WTC11 (cell line): ENCODE measurements at regions of chr1 and their contacts with region 1.

Region 1: DNA sequence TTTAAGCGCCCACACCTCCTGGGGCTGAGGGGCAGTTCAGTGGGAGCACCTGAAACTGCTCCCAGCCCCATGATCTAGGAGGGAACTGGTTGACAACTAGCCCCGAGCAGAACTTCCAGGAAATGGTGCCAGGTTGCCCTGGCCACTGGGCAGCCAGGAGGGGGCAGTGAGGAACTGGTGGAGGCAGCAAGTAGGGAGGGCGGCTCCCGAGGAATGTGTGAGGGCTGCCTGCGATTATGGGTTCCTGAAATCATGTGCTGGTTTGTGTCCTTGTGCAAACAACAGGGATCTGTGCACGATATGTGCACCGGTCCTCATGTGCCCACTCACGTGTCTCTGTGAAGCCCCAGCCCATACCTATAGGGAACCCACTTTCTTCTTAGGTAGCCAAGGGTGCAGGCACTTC is 9.9 kb downstream of the GPR3 start:
- DNase-seq: peak; percentile 69
- ATAC-seq: peak; percentile 18
- H3K4me3 Mint-ChIP-seq: no peak overlapping the region
- H3K27ac Mint-ChIP-seq: peak overlapping the region; percentile 91
- H3K4me1 Mint-ChIP-seq: peaks cover 78% of the 10 kb centered on the region
- H3K27me3 Mint-ChIP-seq: no peaks in the 10 kb centered on the region
- CTCF ChIP-seq: no peak

Region 2: DNA sequence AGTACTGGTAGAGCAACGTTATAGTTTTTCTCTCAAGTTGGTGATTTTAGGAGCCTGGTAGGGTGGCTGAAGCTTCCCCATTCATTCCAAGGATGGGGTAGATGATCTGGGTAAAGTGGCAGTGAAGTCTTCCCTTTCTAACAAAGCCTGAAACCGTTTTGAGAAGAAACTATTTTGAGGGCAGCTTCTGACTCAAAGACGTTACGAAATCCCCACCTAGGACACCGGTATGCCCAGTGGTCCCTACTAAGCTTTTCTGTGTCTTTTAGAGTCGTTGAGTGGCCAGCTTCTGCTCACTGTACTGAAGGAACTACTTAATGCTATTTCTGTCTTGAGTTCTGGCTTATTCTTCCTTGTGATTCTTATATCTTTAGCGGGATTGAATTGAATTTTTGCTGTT is 166.5 kb before region 1 on chr1:
- CTCF ChIA-PET with region 1: no interaction called
- POLR2A ChIA-PET with region 1: no interaction called
- DNase-seq: no peak
- ATAC-seq: no peak
- H3K4me3 Mint-ChIP-seq: peak overlapping the region; percentile 94
- H3K27ac Mint-ChIP-seq: no peak overlapping the region
- H3K4me1 Mint-ChIP-seq: peaks cover 11% of the 10 kb centered on the region
- H3K27me3 Mint-ChIP-seq: peaks cover 18% of the 10 kb centered on the region
- CTCF ChIP-seq: no peak

Region 3: DNA sequence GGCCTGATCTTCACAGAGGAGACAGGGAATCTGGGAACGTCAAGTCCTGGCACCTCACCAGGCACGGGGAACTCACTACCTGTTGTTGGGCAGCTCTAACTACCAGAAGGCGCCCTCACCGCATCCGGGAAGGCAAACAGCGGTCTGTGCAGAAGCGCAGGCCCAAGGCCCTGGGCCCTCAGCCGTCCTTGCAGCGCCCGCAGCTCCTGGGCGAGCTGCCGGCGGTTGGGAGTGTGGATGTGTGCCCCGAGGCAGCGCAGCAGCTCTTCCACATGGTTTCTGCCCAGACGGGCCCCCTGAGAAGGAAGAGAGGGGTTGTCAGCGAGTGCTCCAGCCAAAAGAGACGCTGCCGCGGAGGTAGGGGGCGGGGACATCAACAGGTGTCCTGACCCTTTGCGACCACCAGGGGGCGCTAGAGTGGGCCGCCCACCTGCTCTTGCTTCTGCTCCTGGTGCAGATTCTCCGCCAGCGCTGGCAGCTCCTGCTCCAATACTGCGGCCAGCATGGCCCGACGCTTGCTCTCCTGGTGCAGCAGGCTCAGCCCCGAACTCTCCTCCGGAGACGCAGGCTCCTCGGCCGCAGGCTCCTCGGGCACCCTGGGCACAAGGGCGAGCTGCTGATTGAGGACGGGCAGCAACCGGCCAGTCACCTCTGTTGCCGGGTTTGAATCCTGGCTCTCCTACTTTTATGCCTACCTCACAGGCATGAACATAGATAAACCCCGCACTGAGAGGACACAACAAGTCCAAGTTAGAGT is 44.9 kb before region 1 on chr1:
- CTCF ChIA-PET with region 1: interaction called, 21 read pairs
- POLR2A ChIA-PET with region 1: no interaction called
- DNase-seq: peak; percentile 87
- ATAC-seq: peak; percentile 70
- H3K4me3 Mint-ChIP-seq: peak overlapping the region; percentile 37
- H3K27ac Mint-ChIP-seq: no peak overlapping the region
- H3K4me1 Mint-ChIP-seq: peaks cover 17% of the 10 kb centered on the region
- H3K27me3 Mint-ChIP-seq: peaks cover 49% of the 10 kb centered on the region
- CTCF ChIP-seq: peak; percentile 100

Region 4: DNA sequence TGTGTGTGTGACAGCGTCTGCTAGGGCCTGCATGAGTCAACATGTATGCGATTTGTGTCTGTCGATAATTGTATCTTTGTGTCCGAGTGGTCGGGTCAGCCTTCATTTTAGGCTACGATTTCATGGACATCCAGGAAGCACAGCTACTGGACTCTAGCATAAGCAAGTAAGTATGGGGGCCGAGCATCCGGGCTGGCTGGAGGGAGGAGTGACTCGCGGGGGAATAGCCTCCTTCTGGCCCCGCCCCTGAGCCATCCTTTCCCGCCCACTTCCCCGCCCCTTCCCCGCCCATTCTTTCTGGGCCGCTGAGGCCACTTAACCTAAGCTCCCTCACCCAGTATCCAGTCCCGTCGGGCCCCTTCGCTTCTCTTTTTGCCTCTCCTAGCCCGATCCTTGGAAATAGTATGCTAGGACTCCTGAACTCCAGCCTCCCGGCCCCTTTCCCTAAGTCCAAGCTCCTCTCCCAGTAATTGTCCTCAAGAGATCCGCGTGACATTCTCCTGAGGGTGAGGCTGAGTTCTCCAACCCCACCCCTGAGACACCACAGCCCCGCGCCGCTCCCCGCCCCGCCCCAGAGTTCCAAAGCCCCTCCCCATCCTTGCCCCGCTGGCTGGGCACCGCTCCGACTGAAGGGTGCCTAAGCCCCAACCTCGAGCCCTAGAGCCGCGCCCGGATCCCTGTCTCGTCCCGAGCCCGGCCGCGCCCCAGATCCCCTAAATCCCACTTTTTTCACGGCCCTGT is 36.8 kb before region 1 on chr1:
- CTCF ChIA-PET with region 1: interaction called, 44 read pairs
- POLR2A ChIA-PET with region 1: interaction called, 4 read pairs
- DNase-seq: peak; percentile 86
- ATAC-seq: peak; percentile 53
- H3K4me3 Mint-ChIP-seq: peak overlapping the region; percentile 84
- H3K27ac Mint-ChIP-seq: peak overlapping the region; percentile 97
- H3K4me1 Mint-ChIP-seq: peaks cover 25% of the 10 kb centered on the region
- H3K27me3 Mint-ChIP-seq: peaks cover 33% of the 10 kb centered on the region
- CTCF ChIP-seq: no peak

Region 5: DNA sequence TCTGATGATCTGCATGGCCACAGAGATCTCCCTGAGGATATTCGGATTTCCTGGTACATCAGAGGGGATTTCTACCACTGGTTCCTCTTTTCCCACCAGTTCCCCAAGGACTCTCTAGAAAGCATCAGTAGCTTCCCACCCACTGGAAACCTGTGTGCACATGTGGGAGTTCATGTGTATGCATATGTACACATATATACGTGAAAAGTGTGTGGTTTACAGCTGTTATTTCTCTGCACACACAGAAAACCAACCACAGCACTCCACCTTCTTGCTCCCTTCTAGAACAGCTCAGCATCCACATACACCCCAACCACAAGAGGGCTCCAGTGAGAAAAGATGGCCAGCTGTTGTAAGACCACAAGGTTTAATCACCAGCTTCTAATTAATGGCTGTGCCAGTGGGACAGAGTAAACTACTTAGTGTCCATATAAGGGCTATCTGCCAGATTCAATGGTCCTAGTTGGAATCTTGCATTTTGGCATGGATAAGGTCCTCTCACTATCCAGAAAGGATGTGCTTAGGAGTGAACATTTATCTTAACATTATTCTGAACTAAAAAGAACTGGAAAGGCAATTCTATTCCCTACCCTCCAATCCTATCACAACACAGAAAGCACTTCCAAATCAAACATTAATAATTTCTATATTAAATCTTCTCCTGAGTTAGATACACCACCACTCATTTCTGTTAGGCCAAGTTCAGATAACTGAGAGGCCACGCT is 14.2 kb after region 1 on chr1:
- CTCF ChIA-PET with region 1: interaction called, 36 read pairs
- POLR2A ChIA-PET with region 1: interaction called, 3 read pairs
- DNase-seq: no peak
- ATAC-seq: peak; percentile 67
- H3K4me3 Mint-ChIP-seq: no peak overlapping the region
- H3K27ac Mint-ChIP-seq: peak overlapping the region; percentile 50; the same call in 1 of the 2 replicates
- H3K4me1 Mint-ChIP-seq: peaks cover 41% of the 10 kb centered on the region
- H3K27me3 Mint-ChIP-seq: no peaks in the 10 kb centered on the region
- CTCF ChIP-seq: 0 out of 2 replicates have a peak, but pooled peaks have one; percentile 1

Region 6: GRCh38 chr1:27423709-27424108 is 21.4 kb after region 1 on chr1:
- CTCF ChIA-PET with region 1: interaction called, 14 read pairs
- POLR2A ChIA-PET with region 1: interaction called, 5 read pairs
- DNase-seq: no peak
- ATAC-seq: no peak
- H3K4me3 Mint-ChIP-seq: no peak overlapping the region
- H3K27ac Mint-ChIP-seq: peak overlapping the region; percentile 19; the same call in 1 of the 2 replicates
- H3K4me1 Mint-ChIP-seq: peaks cover 71% of the 10 kb centered on the region
- H3K27me3 Mint-ChIP-seq: no peaks in the 10 kb centered on the region
- CTCF ChIP-seq: no peak

Region 7: DNA sequence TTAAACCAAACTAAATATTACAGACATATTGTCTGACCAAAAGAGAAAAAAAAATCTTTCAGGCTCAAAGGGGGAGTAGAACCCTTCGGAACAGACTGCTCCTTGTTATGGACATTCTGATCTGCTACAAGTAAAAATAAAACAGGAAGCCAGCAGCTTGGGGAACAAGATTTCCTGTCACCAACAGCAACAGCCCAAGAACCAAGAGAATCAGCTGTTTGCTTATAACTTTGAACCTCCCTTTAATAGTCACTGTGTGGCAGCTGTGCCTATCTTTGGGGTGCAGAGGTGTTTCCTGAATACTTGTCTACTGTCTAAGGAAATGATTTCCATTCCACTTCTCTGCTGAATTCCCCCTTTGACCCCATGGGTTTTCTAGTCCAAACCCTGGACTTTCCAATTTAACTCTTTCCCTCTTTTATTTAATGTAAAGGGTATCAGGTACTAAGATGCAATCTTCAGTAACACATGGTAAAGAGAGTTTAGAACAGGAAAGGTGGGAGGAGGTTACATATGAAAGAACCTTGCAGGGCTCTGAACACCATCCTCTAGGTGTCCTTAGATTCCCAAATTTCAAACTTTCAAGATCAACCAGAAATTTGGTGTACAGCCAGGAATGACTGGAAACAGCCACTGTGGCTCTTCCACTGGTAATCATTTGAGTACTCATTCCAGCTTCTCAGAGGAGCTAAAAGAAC is 28.7 kb after region 1 on chr1:
- CTCF ChIA-PET with region 1: interaction called, 14 read pairs
- POLR2A ChIA-PET with region 1: interaction called, 3 read pairs
- DNase-seq: no peak
- ATAC-seq: no peak
- H3K4me3 Mint-ChIP-seq: no peak overlapping the region
- H3K27ac Mint-ChIP-seq: peak overlapping the region; percentile 91
- H3K4me1 Mint-ChIP-seq: peaks cover 75% of the 10 kb centered on the region
- H3K27me3 Mint-ChIP-seq: no peaks in the 10 kb centered on the region
- CTCF ChIP-seq: no peak

Region 8: GRCh38 chr1:27760426-27760825 is 358.1 kb after region 1 on chr1:
- CTCF ChIA-PET with region 1: no interaction called
- POLR2A ChIA-PET with region 1: no interaction called
- DNase-seq: no peak
- ATAC-seq: no peak
- H3K4me3 Mint-ChIP-seq: no peak overlapping the region
- H3K27ac Mint-ChIP-seq: no peak overlapping the region
- H3K4me1 Mint-ChIP-seq: no peaks in the 10 kb centered on the region
- H3K27me3 Mint-ChIP-seq: no peaks in the 10 kb centered on the region
- CTCF ChIP-seq: no peak